K562 (cell line): ENCODE measurements at regions of chr7 and their contacts with region 1.

Region 1: DNA sequence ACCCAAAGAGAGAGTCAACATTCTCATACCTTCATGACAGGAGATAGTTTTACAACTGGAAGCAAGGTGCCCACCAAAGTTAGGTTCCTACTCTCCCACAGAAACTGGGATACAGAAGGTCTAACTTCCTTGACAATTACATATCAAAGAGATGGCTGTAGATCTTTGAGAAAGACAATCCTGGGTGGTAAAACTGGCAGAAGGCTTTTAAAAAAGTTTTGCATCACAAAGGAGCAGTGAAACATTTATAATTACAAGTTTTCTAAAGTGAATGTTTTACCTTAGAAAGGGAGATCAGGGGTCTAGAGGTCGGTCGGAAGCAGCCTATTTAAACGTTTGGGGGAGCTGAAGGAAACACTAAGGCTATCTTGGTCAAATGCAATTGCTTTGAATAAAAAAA is 166.6 kb upstream of the STEAP1 start:
- DNase-seq: no peak
- ATAC-seq: no peak
- H3K4me3 ChIP-seq: no peak overlapping the region
- H3K27ac ChIP-seq: no peak overlapping the region
- H3K4me1 ChIP-seq: no peaks in the 10 kb centered on the region
- H3K27me3 ChIP-seq: no peaks in the 10 kb centered on the region
- CTCF ChIP-seq: no peak
- EP300 ChIP-seq: no peak
- POLR2A ChIP-seq: no peak
- RAD21 ChIP-seq: no peak

Region 2: GRCh38 chr7:89914711-89915110 is 73.0 kb before region 1 on chr7:
- CTCF ChIA-PET with region 1: no interaction called
- POLR2A ChIA-PET with region 1: no interaction called
- in situ Hi-C with region 1: no loop called
- intact Hi-C with region 1: loop called (anchors 2 kb)
- DNase-seq: no peak
- ATAC-seq: no peak
- H3K4me3 ChIP-seq: no peak overlapping the region
- H3K27ac ChIP-seq: no peak overlapping the region
- H3K4me1 ChIP-seq: no peaks in the 10 kb centered on the region
- H3K27me3 ChIP-seq: no peaks in the 10 kb centered on the region
- CTCF ChIP-seq: no peak
- EP300 ChIP-seq: no peak
- POLR2A ChIP-seq: no peak
- RAD21 ChIP-seq: no peak